ENCODE measurements at regions of chr13 and their contacts with region 1.

Region 1: GRCh38 chr13:49278211-49278610 is 30.5 kb downstream of the CDADC1 start:
- DNase-seq: no peak
- H3K4me3 ChIP-seq: no peak overlapping the region
- H3K4me3 Mint-ChIP-seq: no peak overlapping the region
- H3K27ac Mint-ChIP-seq: no peak overlapping the region
- H3K4me1 ChIP-seq: 0 out of 2 replicates have a peak, but pooled peaks cover 3% of the 10 kb centered on the region
- H3K4me1 Mint-ChIP-seq: no peaks in the 10 kb centered on the region
- H3K27me3 ChIP-seq: no peaks in the 10 kb centered on the region
- H3K27me3 Mint-ChIP-seq: no peaks in the 10 kb centered on the region
- CTCF ChIP-seq: no peak

Region 2: GRCh38 chr13:49220036-49220855 is 58.0 kb before region 1 on chr13 and contains the start of gene MLNR:
- CTCF ChIA-PET with region 1: interaction called, 6 read pairs
- POLR2A ChIA-PET with region 1: no interaction called
- intact Hi-C with region 1: loop called (anchors 10 kb)
- DNase-seq: peak; percentile 70 to 82
- H3K4me3 ChIP-seq: peak within 1 kb of the TSS; percentile 31
- H3K4me3 Mint-ChIP-seq: peak within 1 kb of the TSS; percentile 74
- H3K27ac Mint-ChIP-seq: no peak within 1 kb of the TSS
- H3K4me1 ChIP-seq: 0 out of 2 replicates have a peak, but pooled peaks cover 3% of the 10 kb centered on the region
- H3K4me1 Mint-ChIP-seq: peaks cover 19% of the 10 kb centered on the region
- H3K27me3 ChIP-seq: no peaks in the 10 kb centered on the region
- H3K27me3 Mint-ChIP-seq: peaks cover 14% of the 10 kb centered on the region
- CTCF ChIP-seq: peak; percentile 33 to 38
- total RNA-seq, gene MLNR: 0.44 TPM in 1 of 2 replicates, not detected in the other

Region 3: DNA sequence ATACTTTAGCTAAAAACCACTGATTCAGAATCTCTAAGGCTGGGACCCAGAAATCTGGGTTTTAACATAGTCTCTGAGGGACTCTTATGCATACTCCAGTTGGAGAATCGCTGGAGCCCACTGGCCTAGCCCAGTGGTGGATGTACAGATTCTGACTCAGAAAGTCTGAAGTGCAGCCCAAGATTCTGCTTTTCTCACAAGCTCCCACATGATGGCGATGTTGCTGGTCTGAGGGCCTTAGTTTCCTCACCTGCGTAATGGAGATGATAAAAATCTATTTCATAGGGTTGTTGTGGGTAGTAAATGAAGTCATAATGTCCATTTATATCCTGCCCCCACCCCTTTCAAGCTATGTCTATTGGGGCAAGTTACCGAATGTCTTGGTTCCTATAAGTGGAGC is 38.2 kb before region 1 on chr13:
- CTCF ChIA-PET with region 1: interaction called, 8 read pairs
- POLR2A ChIA-PET with region 1: no interaction called
- intact Hi-C with region 1: loop called (anchors 1 kb)
- DNase-seq: peak in 1 of 2 experiments; percentile 33
- H3K4me3 ChIP-seq: no peak overlapping the region
- H3K4me3 Mint-ChIP-seq: no peak overlapping the region
- H3K27ac Mint-ChIP-seq: no peak overlapping the region
- H3K4me1 ChIP-seq: peaks cover 13% of the 10 kb centered on the region; the same call in 1 of the 2 replicates
- H3K4me1 Mint-ChIP-seq: peaks cover 9% of the 10 kb centered on the region
- H3K27me3 ChIP-seq: no peaks in the 10 kb centered on the region
- H3K27me3 Mint-ChIP-seq: peaks cover 1% of the 10 kb centered on the region
- CTCF ChIP-seq: peak; percentile 35 to 55

Region 4: GRCh38 chr13:49247643-49248621 is 30.3 kb before region 1 on chr13 and contains the start of gene CDADC1:
- CTCF ChIA-PET with region 1: interaction called, 20 read pairs
- POLR2A ChIA-PET with region 1: no interaction called
- intact Hi-C with region 1: loop called (anchors 1 kb)
- DNase-seq: peak; percentile 98
- H3K4me3 ChIP-seq: peak within 1 kb of the TSS; percentile 97
- H3K4me3 Mint-ChIP-seq: peak within 1 kb of the TSS; percentile 89
- H3K27ac Mint-ChIP-seq: peak within 1 kb of the TSS; percentile 88
- H3K4me1 ChIP-seq: peaks cover 4% of the 10 kb centered on the region; the same call in 1 of the 2 replicates
- H3K4me1 Mint-ChIP-seq: no peaks in the 10 kb centered on the region
- H3K27me3 ChIP-seq: no peaks in the 10 kb centered on the region
- H3K27me3 Mint-ChIP-seq: peaks cover 2% of the 10 kb centered on the region
- CTCF ChIP-seq: no peak
- total RNA-seq, gene CDADC1: 14.4 and 15.9 TPM in 2 replicates

Measured in Caco-2 (cell line).